ENCODE measurements at regions of chr11 and their contacts with region 1.

Region 1: GRCh38 chr11:78045851-78046485 is 17.7 kb upstream of the THRSP start:
- DNase-seq: peak; percentile 56 to 93
- H3K4me3 ChIP-seq: peak overlapping the region; percentile 37; the same call in 1 of the 2 replicates
- H3K27ac ChIP-seq: no peak overlapping the region
- H3K4me1 ChIP-seq: peaks cover 10% of the 10 kb centered on the region
- H3K27me3 ChIP-seq: no peaks in the 10 kb centered on the region
- CTCF ChIP-seq: peak; percentile 100

Region 2: DNA sequence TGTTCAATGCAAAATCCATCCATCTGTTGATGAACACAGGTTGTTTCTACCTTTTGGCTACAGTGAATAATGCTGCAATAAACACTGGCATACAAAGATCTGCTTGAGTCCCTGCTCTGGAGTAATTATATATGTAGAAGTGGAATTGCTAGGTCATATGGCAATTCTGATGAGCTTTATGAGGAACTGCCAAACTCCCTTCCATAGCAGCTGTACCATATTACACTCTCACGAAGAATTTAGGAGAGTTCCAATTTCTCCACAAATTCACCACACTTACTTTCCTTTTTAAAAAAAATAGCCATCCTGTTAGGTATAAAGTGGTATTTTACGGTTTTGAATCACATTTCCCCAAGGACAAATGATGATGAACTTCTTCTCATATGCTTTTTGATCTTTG is 287.6 kb before region 1 on chr11:
- CTCF ChIA-PET with region 1: no interaction called
- POLR2A ChIA-PET with region 1: no interaction called
- intact Hi-C with region 1: no loop called
- DNase-seq: no peak
- H3K4me3 ChIP-seq: no peak overlapping the region
- H3K27ac ChIP-seq: no peak overlapping the region
- H3K4me1 ChIP-seq: no peaks in the 10 kb centered on the region
- H3K27me3 ChIP-seq: no peaks in the 10 kb centered on the region
- CTCF ChIP-seq: no peak

Region 3: DNA sequence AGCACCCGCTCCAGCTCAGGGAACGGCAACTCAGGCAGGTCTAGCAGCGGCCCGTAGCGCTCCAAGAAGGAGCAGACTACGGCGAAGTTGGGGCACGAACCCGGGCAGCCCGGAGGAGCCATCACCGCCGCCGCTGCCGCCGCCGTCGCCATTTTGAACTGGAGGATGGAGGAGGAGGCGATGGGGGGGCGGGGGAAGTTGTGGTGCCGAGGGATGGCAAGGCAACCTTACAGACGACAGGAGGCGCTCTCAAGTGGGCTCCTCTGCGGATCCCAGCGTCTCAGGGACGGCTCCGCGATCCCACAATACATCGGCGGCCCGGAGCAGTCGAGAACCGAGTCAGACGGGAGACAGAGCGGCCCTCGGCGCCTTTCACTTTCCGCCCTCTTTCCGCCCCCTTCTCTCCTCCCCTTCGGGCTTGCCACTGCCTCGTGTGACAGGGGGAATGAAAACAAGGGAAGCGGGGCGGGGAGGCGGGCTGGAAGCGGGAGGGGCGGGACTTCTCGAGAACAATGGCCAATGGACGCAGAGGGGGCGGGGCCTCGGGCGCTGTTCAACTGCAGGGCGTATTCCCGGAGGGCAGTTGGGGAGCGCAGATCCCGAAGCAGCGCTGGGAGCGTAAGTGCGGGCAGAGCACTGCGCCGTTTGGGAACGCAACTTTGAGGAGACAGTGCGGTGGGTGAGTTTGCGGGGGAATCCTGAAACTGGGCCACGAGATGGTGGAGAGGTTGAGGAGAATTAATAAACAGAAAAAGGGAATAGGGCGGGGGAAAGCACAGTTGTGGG is 225.2 kb before region 1 on chr11 and contains the starts of genes AAMDC and RSF1:
- CTCF ChIA-PET with region 1: no interaction called
- POLR2A ChIA-PET with region 1: no interaction called
- intact Hi-C with region 1: loop called (anchors 1 kb)
- DNase-seq: peak; percentile 97 to 99
- H3K4me3 ChIP-seq: peak within 1 kb of the TSS; percentile 89
- H3K27ac ChIP-seq: peak within 1 kb of the TSS; percentile 55
- H3K4me1 ChIP-seq: peaks cover 38% of the 10 kb centered on the region
- H3K27me3 ChIP-seq: no peaks in the 10 kb centered on the region
- CTCF ChIP-seq: peak; percentile 85
- total RNA-seq, gene AAMDC: 39.8 and 59.3 TPM in 2 replicates
- total RNA-seq, gene RSF1: 110 and 124 TPM in 2 replicates

Region 4: DNA sequence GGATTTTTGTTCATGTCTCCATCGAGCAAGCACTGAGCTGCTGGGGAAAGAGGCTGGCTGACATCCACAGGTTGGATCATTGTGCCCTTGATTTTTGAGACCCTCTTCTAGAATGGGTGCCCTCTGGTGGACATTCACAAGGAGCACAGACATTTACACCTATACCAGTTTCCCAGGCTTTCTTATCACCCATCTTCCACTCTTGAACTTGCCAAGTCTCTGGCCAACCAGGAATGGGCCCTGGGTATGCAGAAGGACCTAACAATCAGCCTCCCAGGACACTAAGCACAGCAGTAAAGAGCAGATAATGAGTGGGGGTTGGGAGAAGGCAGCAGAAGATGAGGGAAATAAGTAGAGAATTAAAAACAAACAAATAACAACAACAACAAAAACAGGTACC is 45.8 kb before region 1 on chr11:
- CTCF ChIA-PET with region 1: interaction called, 14 read pairs
- POLR2A ChIA-PET with region 1: interaction called, 3 read pairs
- intact Hi-C with region 1: loop called (anchors 1 kb)
- DNase-seq: peak; percentile 45 to 70
- H3K4me3 ChIP-seq: no peak overlapping the region
- H3K27ac ChIP-seq: no peak overlapping the region
- H3K4me1 ChIP-seq: peaks cover 7% of the 10 kb centered on the region
- H3K27me3 ChIP-seq: no peaks in the 10 kb centered on the region
- CTCF ChIP-seq: peak; percentile 89